MCF 10A (cell line): ENCODE measurements at regions of chr5 and their contacts with region 1.

Region 1: DNA sequence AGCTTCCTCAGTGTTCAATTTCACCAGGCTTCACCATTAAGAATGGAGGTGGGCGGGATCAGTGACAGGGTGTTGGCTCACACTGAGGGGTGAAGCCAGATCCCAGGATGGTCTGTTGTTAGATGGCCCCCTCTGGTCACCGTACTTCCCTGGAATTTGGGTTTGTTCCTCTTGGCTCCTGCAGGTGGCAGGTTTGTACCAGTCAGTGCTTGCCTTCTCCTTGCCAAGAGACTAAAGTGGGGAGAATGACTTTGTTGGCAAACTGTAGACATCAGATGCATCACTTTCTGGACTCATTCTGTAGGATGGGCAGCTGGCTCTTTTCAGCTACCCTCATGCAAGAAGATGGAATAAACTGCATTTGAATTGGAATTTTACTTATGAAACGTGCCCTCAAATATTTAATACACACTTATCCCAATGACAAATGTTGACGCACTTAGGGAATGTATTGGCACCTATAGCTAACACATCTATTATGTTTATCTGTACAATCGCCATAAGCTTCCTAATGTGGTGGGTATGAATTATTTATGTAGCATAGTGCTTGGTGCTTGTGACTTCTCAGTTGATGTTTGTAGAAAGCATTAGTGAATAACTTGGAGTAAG is 31.4 kb upstream of the ANKRD55 start:
- DNase-seq: peak; percentile 79
- H3K4me3 Mint-ChIP-seq: no peak overlapping the region
- H3K27ac Mint-ChIP-seq: no peak overlapping the region
- H3K4me1 Mint-ChIP-seq: peaks cover 3% of the 10 kb centered on the region
- H3K27me3 Mint-ChIP-seq: no peaks in the 10 kb centered on the region
- CTCF ChIP-seq: peak; percentile 47

Region 2: DNA sequence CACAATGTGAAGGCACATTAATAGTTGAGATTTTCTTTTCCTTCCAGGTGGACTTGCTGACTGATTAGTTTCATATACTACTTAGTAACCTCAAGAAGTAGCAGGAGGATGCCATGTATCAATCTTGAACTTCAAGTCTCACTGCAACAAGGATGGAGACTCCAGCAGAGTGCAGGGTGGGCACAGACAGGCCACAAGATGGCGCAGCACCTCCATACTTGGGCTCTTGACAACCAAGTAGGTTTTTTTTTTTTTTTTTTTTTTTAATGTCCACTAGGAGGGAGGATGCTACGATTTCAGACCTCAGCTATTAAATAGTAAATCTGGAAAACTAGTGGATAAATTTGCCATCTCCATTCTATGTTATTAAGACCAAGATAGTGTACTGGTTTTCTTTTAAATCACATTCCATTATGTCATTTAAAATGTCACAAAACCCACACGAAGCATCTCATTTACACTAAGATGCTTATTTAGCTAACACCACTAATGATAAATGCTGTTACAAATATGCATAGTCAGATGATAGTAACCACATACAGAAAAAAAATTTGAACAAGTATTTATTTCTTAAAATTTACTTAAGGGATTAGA is 328.3 kb before region 1 on chr5:
- CTCF ChIA-PET with region 1: interaction called, 20 read pairs
- POLR2A ChIA-PET with region 1: no interaction called
- intact Hi-C with region 1: no loop called
- DNase-seq: peak; percentile 76
- H3K4me3 Mint-ChIP-seq: no peak overlapping the region
- H3K27ac Mint-ChIP-seq: no peak overlapping the region
- H3K4me1 Mint-ChIP-seq: no peaks in the 10 kb centered on the region
- H3K27me3 Mint-ChIP-seq: no peaks in the 10 kb centered on the region
- CTCF ChIP-seq: peak; percentile 60

Region 3: DNA sequence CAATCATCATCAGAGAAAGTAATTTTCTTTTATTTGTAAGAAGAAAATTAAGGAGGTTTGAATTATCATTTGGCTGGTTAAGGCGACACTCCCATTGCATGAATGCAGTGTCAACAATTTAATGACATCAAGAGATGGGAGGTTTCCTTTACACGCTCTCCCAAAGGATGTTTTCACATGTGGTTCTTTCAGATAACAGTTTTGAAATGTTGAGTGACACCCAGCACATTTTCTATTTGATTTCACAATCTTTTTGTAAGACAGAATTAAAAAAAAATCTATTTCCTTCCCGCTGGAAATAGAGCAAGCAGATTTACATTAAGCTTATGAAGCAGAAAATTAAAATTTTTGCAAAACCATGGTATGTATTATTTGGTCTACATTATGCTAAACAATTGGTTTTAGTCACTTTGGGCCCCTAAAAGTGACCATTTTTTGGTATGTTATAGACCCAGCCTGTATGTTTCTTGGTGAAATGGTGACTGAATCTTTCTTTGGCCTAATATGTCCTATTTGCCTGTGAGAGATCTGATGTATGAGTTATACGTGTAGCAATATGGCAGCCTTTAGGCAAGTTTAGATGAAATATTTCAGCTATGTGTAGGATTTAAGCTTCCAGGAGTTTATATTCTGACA is 12.5 kb before region 1 on chr5:
- CTCF ChIA-PET with region 1: interaction called, 13 read pairs
- POLR2A ChIA-PET with region 1: interaction called, 3 read pairs
- intact Hi-C with region 1: no loop called
- DNase-seq: no peak
- H3K4me3 Mint-ChIP-seq: no peak overlapping the region
- H3K27ac Mint-ChIP-seq: no peak overlapping the region
- H3K4me1 Mint-ChIP-seq: no peaks in the 10 kb centered on the region
- H3K27me3 Mint-ChIP-seq: peaks cover 9% of the 10 kb centered on the region
- CTCF ChIP-seq: no peak

Region 4: GRCh38 chr5:56286015-56286884 is 21.7 kb after region 1 on chr5:
- CTCF ChIA-PET with region 1: no interaction called
- POLR2A ChIA-PET with region 1: no interaction called
- intact Hi-C with region 1: no loop called
- DNase-seq: no peak
- H3K4me3 Mint-ChIP-seq: no peak overlapping the region
- H3K27ac Mint-ChIP-seq: no peak overlapping the region
- H3K4me1 Mint-ChIP-seq: no peaks in the 10 kb centered on the region
- H3K27me3 Mint-ChIP-seq: no peaks in the 10 kb centered on the region
- CTCF ChIP-seq: no peak

Region 5: DNA sequence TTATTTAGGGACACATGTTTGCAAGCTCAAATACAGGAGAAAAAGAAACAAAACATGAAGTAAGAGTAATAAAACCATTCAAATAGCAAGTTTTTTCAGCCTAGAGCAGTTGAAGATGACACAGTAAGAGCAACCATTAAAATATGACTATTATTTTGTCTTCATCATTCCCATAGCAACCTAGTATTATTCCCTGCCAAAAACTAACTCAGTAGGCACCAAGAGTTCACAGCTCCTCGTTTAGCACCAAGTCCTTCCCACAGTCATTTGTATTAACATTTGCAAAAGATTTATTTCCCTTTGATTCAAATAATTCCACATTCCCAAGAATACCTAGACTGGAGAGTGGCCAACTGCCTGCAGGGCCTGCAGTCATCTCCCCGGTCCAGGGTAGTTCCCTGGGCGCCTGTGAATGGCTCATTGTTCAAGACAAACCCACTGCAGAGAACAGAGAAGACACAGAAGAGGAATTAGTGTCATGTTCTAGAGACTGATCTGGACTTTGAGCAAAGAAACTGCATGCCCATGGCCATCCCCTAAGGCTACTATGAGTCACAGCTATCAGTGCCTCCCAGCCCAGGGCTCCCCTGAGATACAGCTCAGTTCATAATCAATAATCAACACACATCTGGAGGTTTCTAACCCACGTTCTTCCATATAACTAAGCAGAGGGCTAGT is 411.7 kb after region 1 on chr5:
- CTCF ChIA-PET with region 1: no interaction called
- POLR2A ChIA-PET with region 1: no interaction called
- intact Hi-C with region 1: no loop called
- DNase-seq: peak; percentile 16
- H3K4me3 Mint-ChIP-seq: no peak overlapping the region
- H3K27ac Mint-ChIP-seq: no peak overlapping the region
- H3K4me1 Mint-ChIP-seq: peaks cover 11% of the 10 kb centered on the region
- H3K27me3 Mint-ChIP-seq: no peaks in the 10 kb centered on the region
- CTCF ChIP-seq: no peak

Region 6: GRCh38 chr5:56900858-56901578 is 636.5 kb after region 1 on chr5:
- CTCF ChIA-PET with region 1: interaction called, 15 read pairs
- POLR2A ChIA-PET with region 1: no interaction called
- intact Hi-C with region 1: no loop called
- DNase-seq: peak; percentile 63
- H3K4me3 Mint-ChIP-seq: no peak overlapping the region
- H3K27ac Mint-ChIP-seq: no peak overlapping the region
- H3K4me1 Mint-ChIP-seq: no peaks in the 10 kb centered on the region
- H3K27me3 Mint-ChIP-seq: no peaks in the 10 kb centered on the region
- CTCF ChIP-seq: peak; percentile 78